BJ (cell line): ENCODE measurements at regions of chr13 and their contacts with region 1.

Region 1: DNA sequence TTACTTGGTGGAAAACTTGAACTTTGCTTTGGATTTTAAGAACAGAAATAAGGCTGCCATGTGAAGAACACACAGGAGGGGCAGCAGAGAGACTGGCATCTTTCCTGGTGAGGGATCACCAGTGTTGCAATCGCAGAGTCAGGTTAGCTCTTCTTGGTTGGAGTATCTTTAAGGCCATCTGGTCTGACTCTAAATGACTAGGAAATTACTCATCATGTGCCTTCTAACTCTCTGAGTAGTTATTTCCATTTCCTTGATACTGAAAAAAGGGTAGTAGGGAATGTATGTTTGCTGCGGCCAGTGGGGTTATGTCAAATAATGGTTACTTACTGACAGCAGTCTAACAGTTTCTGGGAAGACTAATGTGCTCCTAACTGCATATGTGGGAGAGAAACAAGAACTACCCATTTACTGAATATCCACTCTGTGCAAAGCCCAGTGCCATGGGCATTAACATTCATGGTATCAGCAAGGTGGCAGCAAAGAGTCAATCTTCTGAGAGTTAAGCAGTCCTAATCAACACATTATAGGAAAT is 122.1 kb downstream of the COG6 start:
- DNase-seq: peak; percentile 52
- H3K4me3 ChIP-seq: no peak overlapping the region
- H3K27me3 ChIP-seq: no peaks in the 10 kb centered on the region
- CTCF ChIP-seq: peak; percentile 66

Region 2: DNA sequence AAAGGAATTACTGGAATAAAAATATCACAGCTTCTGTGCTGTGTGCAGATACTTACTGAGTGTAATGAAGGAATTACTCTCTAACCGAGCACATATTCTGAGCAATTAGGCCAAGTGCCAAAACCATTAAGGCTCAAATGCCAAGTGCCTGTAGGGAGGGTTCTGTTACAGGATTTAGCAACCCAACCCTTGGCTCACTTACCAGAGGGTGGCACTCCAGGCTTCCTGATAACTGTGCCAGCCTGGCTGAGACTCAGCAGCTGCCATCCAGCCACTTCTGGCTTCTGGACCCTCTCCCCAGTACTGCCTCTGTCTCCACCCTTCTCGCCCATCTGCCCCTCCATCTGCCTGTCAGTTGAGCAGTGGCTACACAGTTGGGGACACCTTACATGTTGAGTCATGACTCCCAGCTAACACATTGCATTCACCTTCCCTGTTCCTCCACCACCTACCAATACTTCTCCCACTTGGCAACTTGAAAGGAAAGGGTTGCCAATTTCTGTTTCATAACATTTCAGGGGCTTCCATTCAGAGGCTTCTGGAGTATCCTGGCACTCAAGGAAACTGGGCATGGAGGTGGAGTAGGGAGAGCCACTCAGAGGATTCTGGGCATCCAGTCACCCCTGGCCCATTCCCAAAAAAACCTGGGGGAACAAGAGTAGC is 11.7 kb before region 1 on chr13:
- CTCF ChIA-PET with region 1: interaction called, 24 read pairs
- POLR2A ChIA-PET with region 1: no interaction called
- DNase-seq: no peak
- H3K4me3 ChIP-seq: no peak overlapping the region
- H3K27me3 ChIP-seq: no peaks in the 10 kb centered on the region
- CTCF ChIP-seq: peak; percentile 18; the same call in 1 of the 2 replicates